ENCODE measurements at regions of chr22 and their contacts with region 1.

Region 1: GRCh38 chr22:44625981-44626687 is 75.9 kb upstream of the PRR5 start:
- DNase-seq: peak; percentile 94
- H3K4me3 Mint-ChIP-seq: no peak overlapping the region
- H3K27ac Mint-ChIP-seq: no peak overlapping the region
- H3K4me1 Mint-ChIP-seq: peaks cover 4% of the 10 kb centered on the region
- H3K27me3 Mint-ChIP-seq: peaks cover 3% of the 10 kb centered on the region

Region 2: DNA sequence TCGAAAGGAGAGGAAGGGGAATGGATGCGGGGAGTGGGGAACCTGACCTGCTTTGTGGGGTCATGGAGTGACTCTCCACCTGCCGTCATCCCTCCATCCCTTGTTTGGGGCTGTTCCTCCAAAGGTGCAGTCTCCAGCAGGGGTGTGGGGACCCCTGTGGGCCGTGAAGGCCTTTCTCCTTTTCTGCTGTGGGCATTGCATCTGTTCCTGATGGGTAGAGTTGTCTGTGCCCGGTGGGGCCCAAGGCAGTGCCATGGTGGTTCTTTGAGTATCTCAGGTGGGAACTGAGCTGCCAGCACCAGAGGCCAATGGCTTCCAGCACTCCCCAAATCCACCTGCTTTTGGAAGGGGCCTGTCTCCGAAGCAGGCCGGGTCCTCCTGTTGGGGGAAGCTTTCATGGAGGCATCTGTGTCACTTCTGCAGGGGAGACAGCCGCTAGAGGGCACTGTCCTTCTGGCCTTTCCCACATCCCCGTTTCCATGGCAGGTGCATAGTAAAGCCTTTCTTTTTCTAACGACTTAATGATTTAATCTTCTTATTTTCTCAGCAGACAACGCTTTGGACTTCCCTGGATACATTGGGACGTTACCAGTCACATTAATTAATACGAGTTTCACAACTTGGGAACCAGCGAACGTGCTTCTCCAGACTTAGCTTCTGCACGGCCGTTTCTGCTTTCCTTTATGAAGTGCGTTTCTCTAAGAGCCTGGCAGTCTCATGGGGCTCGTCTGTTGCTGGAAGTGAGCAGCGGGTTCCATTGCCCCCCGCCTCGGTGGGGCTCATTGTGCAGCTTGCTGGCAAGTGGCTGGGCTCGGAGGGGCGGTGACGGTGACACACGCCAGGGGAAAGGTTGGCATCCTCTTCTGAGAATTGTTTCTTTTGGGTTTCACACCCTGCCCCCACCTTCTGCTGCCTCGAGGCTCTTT is 544.9 kb before region 1 on chr22:
- intact Hi-C with region 1: loop called (anchors 1 kb)
- DNase-seq: peak; percentile 89
- H3K4me3 Mint-ChIP-seq: no peak overlapping the region
- H3K27ac Mint-ChIP-seq: no peak overlapping the region
- H3K4me1 Mint-ChIP-seq: peaks cover 1% of the 10 kb centered on the region
- H3K27me3 Mint-ChIP-seq: no peaks in the 10 kb centered on the region